ENCODE measurements at regions of chrX and their contacts with region 1.

Region 1: GRCh38 chrX:107894038-107894437 is 68.4 kb downstream of the MID2 start:
- DNase-seq: peak in 1 of 2 experiments; percentile 42
- H3K4me3 ChIP-seq: no peak overlapping the region
- H3K4me3 Mint-ChIP-seq: no peak overlapping the region
- H3K27ac Mint-ChIP-seq: no peak overlapping the region
- H3K4me1 ChIP-seq: no peaks in the 10 kb centered on the region
- H3K4me1 Mint-ChIP-seq: no peaks in the 10 kb centered on the region
- H3K27me3 ChIP-seq: no peaks in the 10 kb centered on the region
- H3K27me3 Mint-ChIP-seq: no peaks in the 10 kb centered on the region
- CTCF ChIP-seq: peak; percentile 4 to 57

Region 2: DNA sequence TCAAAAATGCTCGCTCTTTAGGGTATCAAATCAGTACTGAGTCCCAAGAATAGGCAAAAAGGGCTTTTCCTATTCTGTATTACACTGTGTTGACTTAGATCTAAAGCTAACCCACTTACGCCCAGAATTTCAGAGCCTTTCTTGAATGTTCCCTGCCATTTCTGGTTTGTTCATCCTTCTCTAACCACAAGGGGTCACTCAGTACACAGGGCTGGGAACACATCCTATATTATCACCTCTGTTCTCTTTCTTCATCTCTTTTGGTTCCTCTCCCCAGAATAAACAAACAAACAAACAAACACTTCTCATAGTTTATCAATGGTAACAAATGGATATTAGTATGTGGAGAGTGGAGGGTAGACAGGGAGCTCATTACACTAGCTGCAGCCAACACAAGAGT is 868.5 kb before region 1 on chrX:
- CTCF ChIA-PET with region 1: no interaction called
- POLR2A ChIA-PET with region 1: no interaction called
- intact Hi-C with region 1: loop called (anchors 10 kb)
- DNase-seq: peak in 1 of 2 experiments; percentile 25
- H3K4me3 ChIP-seq: no peak overlapping the region
- H3K4me3 Mint-ChIP-seq: no peak overlapping the region
- H3K27ac Mint-ChIP-seq: no peak overlapping the region
- H3K4me1 ChIP-seq: no peaks in the 10 kb centered on the region
- H3K4me1 Mint-ChIP-seq: no peaks in the 10 kb centered on the region
- H3K27me3 ChIP-seq: no peaks in the 10 kb centered on the region
- H3K27me3 Mint-ChIP-seq: peaks cover 3% of the 10 kb centered on the region
- CTCF ChIP-seq: peak; percentile 50 to 55

Region 3: DNA sequence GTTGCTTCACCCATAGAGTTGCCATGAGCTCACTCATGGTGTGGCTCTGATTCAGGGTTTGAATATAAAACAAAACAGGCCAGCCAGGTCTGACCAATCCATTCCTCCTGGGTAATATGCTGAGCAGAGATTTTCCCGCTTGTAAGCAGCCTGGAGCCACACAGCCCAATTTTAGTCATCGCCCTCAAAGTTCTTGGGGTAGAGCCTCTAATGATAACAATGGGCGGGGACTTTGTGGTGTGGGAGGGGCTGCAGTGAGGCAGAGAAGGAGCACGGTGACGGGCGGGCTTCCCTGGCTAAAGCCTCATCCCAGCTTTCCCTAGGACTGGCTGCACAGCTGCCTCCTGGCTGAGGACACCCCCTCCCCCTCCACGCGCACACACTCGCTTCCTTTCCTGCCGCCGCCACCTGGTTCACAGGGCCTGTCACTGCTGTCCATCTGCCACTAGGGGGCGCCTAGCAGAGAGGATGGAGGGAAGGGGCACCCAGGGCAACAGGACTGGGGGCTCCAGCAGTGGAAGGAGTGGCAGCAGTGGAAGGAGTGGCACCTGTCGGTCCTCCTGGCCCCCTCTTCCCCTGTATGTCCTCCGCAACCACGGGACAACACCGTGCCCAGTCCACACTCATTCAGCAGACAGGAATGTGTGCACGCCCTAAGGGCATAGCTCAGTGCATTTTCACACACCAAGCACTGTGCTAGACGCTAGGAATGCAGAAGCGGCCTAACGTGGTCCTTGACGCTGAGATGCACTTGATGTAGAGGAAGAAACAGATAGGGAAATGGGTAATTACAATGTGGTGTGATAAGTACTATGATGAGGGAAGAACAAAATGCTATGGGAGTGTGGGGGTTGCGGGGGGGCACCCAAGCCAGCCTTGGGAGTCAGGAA is 238.9 kb before region 1 on chrX:
- CTCF ChIA-PET with region 1: no interaction called
- POLR2A ChIA-PET with region 1: no interaction called
- intact Hi-C with region 1: loop called (anchors 1 kb)
- DNase-seq: peak; percentile 30 to 38
- H3K4me3 ChIP-seq: no peak overlapping the region
- H3K4me3 Mint-ChIP-seq: no peak overlapping the region
- H3K27ac Mint-ChIP-seq: peak overlapping the region; percentile 32
- H3K4me1 ChIP-seq: no peaks in the 10 kb centered on the region
- H3K4me1 Mint-ChIP-seq: no peaks in the 10 kb centered on the region
- H3K27me3 ChIP-seq: no peaks in the 10 kb centered on the region
- H3K27me3 Mint-ChIP-seq: no peaks in the 10 kb centered on the region
- CTCF ChIP-seq: peak; percentile 23 to 29

Region 4: GRCh38 chrX:107823456-107823855 is 70.6 kb before region 1 on chrX:
- CTCF ChIA-PET with region 1: no interaction called
- POLR2A ChIA-PET with region 1: no interaction called
- intact Hi-C with region 1: no loop called
- DNase-seq: no peak
- H3K4me3 ChIP-seq: no peak overlapping the region
- H3K4me3 Mint-ChIP-seq: no peak overlapping the region
- H3K27ac Mint-ChIP-seq: no peak overlapping the region
- H3K4me1 ChIP-seq: no peaks in the 10 kb centered on the region
- H3K4me1 Mint-ChIP-seq: peaks cover 6% of the 10 kb centered on the region
- H3K27me3 ChIP-seq: no peaks in the 10 kb centered on the region
- H3K27me3 Mint-ChIP-seq: peaks cover 12% of the 10 kb centered on the region
- CTCF ChIP-seq: no peak

Region 5: DNA sequence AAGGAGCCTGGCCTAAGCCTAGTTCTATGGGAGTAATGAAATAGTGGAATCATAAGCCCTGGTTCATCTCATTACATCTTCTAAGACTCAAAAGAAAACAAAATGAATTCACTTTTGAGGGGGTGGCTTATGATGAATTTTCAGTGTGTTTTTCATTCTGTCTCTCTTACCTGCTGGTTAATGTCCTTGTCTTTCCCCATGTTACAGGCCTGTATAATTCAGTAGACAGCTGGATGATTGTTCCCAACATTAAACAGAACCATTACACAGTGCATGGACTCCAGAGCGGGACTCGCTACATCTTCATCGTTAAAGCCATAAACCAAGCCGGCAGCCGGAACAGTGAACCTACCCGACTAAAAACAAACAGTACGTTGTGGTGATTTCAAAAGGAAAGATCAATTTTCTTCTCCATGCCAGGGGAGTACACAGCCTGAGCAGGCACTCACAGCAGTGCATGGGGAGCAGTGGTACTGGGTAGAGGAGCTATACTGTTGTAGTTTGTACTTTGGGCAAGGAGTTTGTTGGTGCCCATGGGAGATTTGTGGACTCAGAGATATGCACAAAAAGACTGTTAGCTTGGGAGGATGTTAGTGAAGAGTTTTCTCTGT is 30.2 kb after region 1 on chrX:
- CTCF ChIA-PET with region 1: no interaction called
- POLR2A ChIA-PET with region 1: no interaction called
- intact Hi-C with region 1: no loop called
- DNase-seq: no peak
- H3K4me3 ChIP-seq: no peak overlapping the region
- H3K4me3 Mint-ChIP-seq: no peak overlapping the region
- H3K27ac Mint-ChIP-seq: no peak overlapping the region
- H3K4me1 ChIP-seq: no peaks in the 10 kb centered on the region
- H3K4me1 Mint-ChIP-seq: no peaks in the 10 kb centered on the region
- H3K27me3 ChIP-seq: no peaks in the 10 kb centered on the region
- H3K27me3 Mint-ChIP-seq: peaks cover 6% of the 10 kb centered on the region
- CTCF ChIP-seq: no peak